ENCODE measurements at regions of chr7 and their contacts with region 1.

Region 1: DNA sequence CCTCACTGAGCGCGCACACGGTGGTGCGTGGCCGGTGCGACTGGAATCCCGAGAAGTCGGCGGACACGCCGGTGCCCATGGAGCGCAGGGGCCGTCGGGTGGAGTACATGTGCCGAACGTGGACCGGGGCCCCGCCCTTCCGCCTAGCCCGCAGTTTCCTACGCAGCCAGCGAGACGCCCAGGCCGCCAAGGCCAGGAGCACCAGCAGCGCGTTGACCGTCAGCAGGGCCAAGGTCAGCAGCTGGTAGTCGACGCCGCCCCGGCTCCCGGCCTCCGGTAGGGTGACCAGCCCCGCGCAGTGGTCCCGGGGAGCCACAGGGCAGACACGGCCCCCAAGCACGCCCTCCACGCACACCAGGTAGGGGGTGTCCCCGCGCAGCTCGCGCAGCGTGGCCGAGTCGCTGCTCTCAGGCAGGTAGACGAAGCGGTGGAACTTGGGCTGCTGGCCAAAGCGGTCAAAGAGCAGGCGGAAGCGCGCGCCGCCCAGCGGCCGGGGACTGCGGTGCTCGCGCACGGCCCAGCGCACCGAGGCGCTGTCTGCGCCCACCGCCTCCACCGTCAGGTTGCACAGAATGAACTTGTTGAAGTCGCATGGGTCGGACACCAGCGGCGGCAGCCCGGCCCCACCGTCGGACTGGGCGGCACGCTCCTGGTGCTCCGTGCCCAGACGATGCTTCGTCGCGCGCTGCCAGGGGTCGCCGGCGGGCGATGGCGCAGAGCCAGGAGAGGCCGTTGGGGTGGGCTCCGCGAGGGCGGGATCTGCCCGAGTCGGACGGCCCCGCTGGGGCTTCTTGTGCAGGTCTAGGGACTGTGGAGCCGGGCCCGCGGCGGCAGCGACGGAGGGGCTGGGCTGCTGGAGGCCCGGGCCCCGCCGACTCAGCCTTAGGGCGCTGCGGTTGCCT is 2.2 kb downstream of the TRIL start:
- DNase-seq: peak; percentile 35
- H3K4me3 ChIP-seq: peak overlapping the region; percentile 15 to 47 (median 38)
- H3K27ac ChIP-seq: no peak overlapping the region
- H3K4me1 ChIP-seq: peaks cover 23% of the 10 kb centered on the region
- H3K27me3 ChIP-seq: peaks cover 35% of the 10 kb centered on the region
- CTCF ChIP-seq: peak; percentile 57 to 77

Region 2: DNA sequence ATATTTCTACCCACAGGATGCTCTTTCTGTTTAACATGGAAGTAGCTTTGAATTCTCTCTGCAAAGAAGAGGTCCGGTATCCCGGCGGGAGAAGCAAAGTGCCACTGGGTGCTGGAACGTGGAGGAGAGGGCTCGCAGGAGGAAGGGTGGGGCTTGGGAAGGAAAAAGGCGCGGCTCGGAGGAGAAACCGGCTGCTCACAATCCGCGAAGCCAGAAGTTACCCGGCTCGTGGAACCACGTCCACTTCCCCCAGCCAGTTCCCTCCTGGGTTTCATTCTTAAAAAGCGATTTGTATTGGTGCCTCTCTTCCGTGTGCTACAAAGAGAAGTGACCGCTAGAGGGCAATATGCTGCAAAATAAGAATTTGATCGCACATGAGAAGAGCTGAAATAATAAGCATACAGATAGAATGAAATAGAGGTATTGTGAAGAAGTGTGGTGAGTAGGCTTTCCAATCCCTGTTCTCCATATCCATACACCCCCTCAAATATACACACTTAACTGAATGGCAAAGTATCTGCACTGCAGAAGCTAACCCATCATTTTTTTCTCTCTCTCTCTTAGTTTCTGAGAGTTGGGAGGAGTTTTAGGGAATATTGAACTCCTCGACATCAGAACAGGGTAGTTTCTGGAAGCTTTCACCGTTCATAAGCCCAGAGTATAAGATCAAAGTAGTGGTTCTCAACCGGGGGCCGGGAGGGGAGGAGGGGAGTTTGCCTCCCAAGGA is 28.9 kb before region 1 on chr7:
- CTCF ChIA-PET with region 1: interaction called, 9 read pairs
- dilution Hi-C with region 1: no loop called
- in situ Hi-C with region 1: no loop called
- intact Hi-C with region 1: loop called (anchors 1 kb)
- DNase-seq: peak; percentile 74
- H3K4me3 ChIP-seq: peak overlapping the region; percentile 52 to 59 (median 58)
- H3K27ac ChIP-seq: no peak overlapping the region
- H3K4me1 ChIP-seq: peaks cover 5% of the 10 kb centered on the region
- H3K27me3 ChIP-seq: no peaks in the 10 kb centered on the region
- CTCF ChIP-seq: peak; percentile 76 to 77

Region 3: GRCh38 chr7:28984631-28985030 is 28.7 kb after region 1 on chr7:
- CTCF ChIA-PET with region 1: no interaction called
- dilution Hi-C with region 1: no loop called
- in situ Hi-C with region 1: no loop called
- intact Hi-C with region 1: no loop called
- DNase-seq: peak; percentile 56
- H3K4me3 ChIP-seq: no peak overlapping the region
- H3K27ac ChIP-seq: no peak overlapping the region
- H3K4me1 ChIP-seq: peaks cover 46% of the 10 kb centered on the region
- H3K27me3 ChIP-seq: no peaks in the 10 kb centered on the region
- CTCF ChIP-seq: peak in 1 of 2 donors; percentile 1

Measured in mammary epithelial cell (primary cell).